Tibial artery (tissue), 4 donors: ENCODE measurements at regions of chr10 and their contacts with region 1.

Region 1: GRCh38 chr10:35635576-35635975 is 6.5 kb downstream of the FZD8 start:
- DNase-seq: peak in 1 of 2 donors; percentile 44
- H3K4me3 ChIP-seq: no peak overlapping the region
- H3K27ac ChIP-seq: no peak overlapping the region
- H3K4me1 ChIP-seq: peaks cover 0 to 44% (median 19%) of the 10 kb centered on the region in 4 donors
- H3K27me3 ChIP-seq: no peaks in the 10 kb centered on the region
- CTCF ChIP-seq: peak; percentile 89 to 90

Region 2: DNA sequence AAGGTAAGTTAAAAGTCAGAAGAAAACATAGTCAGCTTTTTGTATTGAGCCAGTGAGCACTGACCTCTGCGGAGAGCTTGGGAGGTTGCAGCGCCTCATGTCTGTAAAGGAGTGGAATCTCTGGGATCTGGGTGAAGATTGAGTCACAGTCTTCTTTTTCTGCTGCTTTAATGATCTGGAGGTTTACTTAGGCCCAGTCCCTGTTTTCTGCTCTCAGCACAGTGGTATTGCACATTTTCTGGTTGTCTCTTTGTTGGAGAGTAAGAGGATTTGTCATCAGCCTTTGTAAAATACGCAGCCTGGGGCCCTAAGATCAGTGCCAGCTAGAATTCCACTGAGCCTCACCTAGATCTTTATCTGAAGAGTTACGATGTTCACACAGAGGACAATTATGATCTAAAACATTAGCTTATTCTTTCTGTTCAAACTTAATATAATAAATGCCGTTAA is 88.7 kb before region 1 on chr10:
- intact Hi-C with region 1: no loop called
- DNase-seq: no peak
- H3K4me3 ChIP-seq: no peak overlapping the region
- H3K27ac ChIP-seq: no peak overlapping the region
- H3K4me1 ChIP-seq: peaks cover 0 to 19% (median 7%) of the 10 kb centered on the region in 4 donors
- H3K27me3 ChIP-seq: no peaks in the 10 kb centered on the region
- CTCF ChIP-seq: no peak

Region 3: GRCh38 chr10:35758076-35758475 is 122.5 kb after region 1 on chr10:
- intact Hi-C with region 1: no loop called
- DNase-seq: peak; percentile 71 to 75
- H3K4me3 ChIP-seq: no peak overlapping the region
- H3K27ac ChIP-seq: no peak overlapping the region
- H3K4me1 ChIP-seq: no peaks in the 10 kb centered on the region
- H3K27me3 ChIP-seq: no peaks in the 10 kb centered on the region
- CTCF ChIP-seq: no peak

Region 4: GRCh38 chr10:36779234-36779846 is 1143.8 kb after region 1 on chr10:
- intact Hi-C with region 1: loop called (anchors 2 kb)
- DNase-seq: peak in 1 of 2 donors; percentile 26
- H3K4me3 ChIP-seq: no peak overlapping the region
- H3K27ac ChIP-seq: no peak overlapping the region
- H3K4me1 ChIP-seq: no peaks in the 10 kb centered on the region
- H3K27me3 ChIP-seq: no peaks in the 10 kb centered on the region
- CTCF ChIP-seq: peak; percentile 85 to 88

Region 5: GRCh38 chr10:36888929-36889573 is 1253.5 kb after region 1 on chr10:
- intact Hi-C with region 1: loop called (anchors 10 kb)
- DNase-seq: no peak
- H3K4me3 ChIP-seq: no peak overlapping the region
- H3K27ac ChIP-seq: no peak overlapping the region
- H3K4me1 ChIP-seq: no peaks in the 10 kb centered on the region
- H3K27me3 ChIP-seq: no peaks in the 10 kb centered on the region
- CTCF ChIP-seq: no peak